ENCODE measurements at regions of chr5 and their contacts with region 1.

Region 1: GRCh38 chr5:176596689-176597416 is 13.1 kb downstream of the GPRIN1 start:
- DNase-seq: peak; percentile 75
- ATAC-seq: peak; percentile 80
- H3K4me3 Mint-ChIP-seq: peak overlapping the region; percentile 62
- H3K27ac Mint-ChIP-seq: no peak overlapping the region
- H3K4me1 Mint-ChIP-seq: 0 out of 2 replicates have a peak, but pooled peaks cover 4% of the 10 kb centered on the region
- H3K27me3 Mint-ChIP-seq: peaks cover 36% of the 10 kb centered on the region
- CTCF ChIP-seq: no peak

Region 2: DNA sequence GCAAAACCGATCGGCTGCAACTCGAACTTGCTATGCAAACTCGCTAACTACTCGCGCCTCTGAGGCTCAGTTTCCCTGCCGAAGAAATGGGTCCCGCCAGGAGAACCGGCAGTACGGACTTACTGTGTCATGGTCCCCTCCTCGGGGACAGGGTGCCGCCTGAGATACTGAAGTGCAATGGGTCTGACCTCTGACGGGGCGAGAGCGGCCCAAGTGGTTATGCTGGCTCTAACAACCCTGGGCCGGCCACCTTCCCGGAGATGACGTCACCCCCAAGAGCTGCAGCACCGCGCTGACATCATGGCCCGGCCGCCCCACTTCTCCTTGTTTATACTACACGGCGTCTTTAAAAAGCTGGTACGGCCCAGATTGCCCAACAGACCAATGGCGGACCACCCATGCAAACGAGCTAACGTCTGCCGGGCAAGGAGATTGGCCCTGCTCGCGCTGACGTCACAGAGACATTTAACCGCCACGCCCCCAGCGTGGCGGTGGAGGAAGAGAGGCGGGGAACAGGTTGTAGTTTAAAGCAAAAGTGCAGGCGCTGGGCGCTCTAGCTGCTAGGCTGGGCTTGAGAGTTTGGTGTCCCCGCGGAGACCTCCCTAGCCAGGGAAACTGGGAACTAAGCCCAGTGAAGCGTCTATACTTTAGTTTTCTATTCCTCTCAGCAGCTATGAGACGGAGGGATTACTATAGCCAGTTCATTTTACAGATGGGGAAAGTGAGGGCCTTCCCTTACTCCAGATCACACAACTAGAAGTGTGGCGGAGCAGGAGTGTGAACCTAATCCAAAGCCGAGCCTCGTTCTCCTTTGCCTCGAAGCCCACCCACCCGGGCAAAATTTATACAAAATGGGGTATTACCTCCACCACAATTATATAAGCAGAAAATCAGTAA is 59.0 kb before region 1 on chr5:
- CTCF ChIA-PET with region 1: interaction called, 16 read pairs
- POLR2A ChIA-PET with region 1: no interaction called
- DNase-seq: peak; percentile 97
- ATAC-seq: peak; percentile 75
- H3K4me3 Mint-ChIP-seq: peak overlapping the region; percentile 94
- H3K27ac Mint-ChIP-seq: peak overlapping the region; percentile 100
- H3K4me1 Mint-ChIP-seq: peaks cover 71% of the 10 kb centered on the region
- H3K27me3 Mint-ChIP-seq: no peaks in the 10 kb centered on the region
- CTCF ChIP-seq: no peak

Region 3: GRCh38 chr5:176543428-176544173 is 53.3 kb before region 1 on chr5:
- CTCF ChIA-PET with region 1: interaction called, 16 read pairs
- POLR2A ChIA-PET with region 1: interaction called, 4 read pairs
- DNase-seq: peak; percentile 76
- ATAC-seq: peak; percentile 58
- H3K4me3 Mint-ChIP-seq: peak overlapping the region; percentile 91
- H3K27ac Mint-ChIP-seq: peak overlapping the region; percentile 97
- H3K4me1 Mint-ChIP-seq: peaks cover 48% of the 10 kb centered on the region
- H3K27me3 Mint-ChIP-seq: no peaks in the 10 kb centered on the region
- CTCF ChIP-seq: no peak

Region 4: DNA sequence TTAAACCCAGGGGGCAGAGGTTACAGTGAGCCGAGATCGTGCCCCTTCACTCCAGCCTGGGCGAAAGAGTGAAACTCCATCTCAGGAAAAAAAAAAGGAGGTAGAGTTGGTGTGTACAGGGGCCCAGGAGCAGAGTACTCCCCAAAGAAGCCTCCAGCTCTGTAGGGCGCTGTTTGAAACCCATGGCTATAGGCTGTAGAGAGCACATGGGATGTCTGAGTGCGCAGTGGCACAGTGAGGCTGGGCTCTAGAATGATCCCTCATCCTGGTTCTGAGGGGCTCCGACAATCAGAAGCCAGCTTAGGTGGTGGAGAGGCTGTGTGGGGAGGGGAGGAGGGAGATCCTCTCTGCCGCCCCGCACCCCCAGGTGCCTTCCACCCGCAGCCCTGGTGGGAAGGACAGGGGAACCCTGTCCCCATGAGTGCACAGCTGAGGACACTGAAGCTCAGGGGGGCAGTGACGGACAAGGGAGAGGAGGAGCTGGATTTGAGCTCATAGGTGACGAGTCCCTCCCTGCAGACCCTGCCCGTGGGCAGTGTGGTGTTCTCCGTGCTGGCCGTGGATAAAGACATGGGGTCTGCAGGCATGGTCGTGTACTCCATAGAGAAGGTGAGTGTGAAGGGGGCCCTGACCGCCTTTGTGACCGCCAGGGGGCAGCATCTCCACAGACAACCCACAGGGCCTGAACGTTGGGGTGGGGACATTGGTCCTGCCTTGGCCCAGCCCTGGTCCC is 23.1 kb before region 1 on chr5:
- CTCF ChIA-PET with region 1: interaction called, 21 read pairs
- POLR2A ChIA-PET with region 1: no interaction called
- DNase-seq: peak; percentile 88
- ATAC-seq: peak; percentile 81
- H3K4me3 Mint-ChIP-seq: no peak overlapping the region
- H3K27ac Mint-ChIP-seq: no peak overlapping the region
- H3K4me1 Mint-ChIP-seq: peaks cover 2% of the 10 kb centered on the region
- H3K27me3 Mint-ChIP-seq: peaks cover 10% of the 10 kb centered on the region
- CTCF ChIP-seq: peak; percentile 87

Measured in WTC11 (cell line).